Heart right ventricle (tissue), 16 donors: ENCODE measurements at regions of chr10 and their contacts with region 1.

Region 1: DNA sequence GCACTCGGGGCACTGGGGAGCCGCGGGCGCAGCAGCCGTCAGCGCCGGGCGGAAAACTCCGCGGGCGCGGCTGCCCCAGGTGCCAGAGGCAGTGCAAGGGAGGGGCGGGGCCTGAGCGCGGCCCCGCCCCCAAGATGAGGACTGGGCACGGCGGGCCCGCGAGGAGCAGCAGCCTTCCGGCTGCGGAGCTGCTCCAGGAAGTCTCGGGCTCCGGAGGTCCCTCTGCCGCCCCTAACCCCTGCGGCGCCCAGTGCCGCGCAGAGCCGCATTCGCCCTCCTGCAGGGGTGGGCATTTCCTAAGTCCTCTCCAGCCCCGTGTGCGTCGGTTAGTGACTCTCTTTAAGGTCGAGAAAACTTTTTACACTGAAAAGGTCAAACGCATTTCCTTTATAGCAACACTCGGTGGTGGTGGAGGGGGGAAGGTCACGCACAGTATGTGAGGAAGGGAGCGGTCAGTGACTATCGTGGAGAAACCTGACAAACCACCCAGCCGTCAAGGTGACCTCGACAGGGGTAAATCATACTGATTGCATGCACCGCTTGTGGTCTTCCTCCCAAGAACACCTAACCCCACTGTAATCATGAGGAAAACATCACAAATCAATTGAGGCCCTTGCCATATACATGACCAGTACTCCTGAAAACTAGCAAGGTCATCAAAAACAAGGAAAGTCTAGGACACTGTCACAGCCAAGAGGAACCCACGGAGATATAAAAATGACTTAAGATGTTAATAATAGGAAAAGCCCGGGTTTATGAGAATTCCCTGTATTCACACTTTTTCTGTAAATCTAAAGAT is at the start of gene ANXA11:
- DNase-seq: peak; percentile 83 to 88
- ATAC-seq: peak; percentile 73 to 88 (median 80)
- H3K4me3 ChIP-seq: peak within 1 kb of the TSS; percentile 64 to 96 (median 82)
- H3K27ac ChIP-seq: peak within 1 kb of the TSS; percentile 97 to 100 (median 99)
- H3K4me1 ChIP-seq: peaks cover 13 to 66% (median 53%) of the 10 kb centered on the region in 9 donors
- H3K27me3 ChIP-seq: no peaks in the 10 kb centered on the region
- CTCF ChIP-seq: no peak
- total RNA-seq, gene ANXA11: 338 to 558 (median 422) TPM

Region 2: DNA sequence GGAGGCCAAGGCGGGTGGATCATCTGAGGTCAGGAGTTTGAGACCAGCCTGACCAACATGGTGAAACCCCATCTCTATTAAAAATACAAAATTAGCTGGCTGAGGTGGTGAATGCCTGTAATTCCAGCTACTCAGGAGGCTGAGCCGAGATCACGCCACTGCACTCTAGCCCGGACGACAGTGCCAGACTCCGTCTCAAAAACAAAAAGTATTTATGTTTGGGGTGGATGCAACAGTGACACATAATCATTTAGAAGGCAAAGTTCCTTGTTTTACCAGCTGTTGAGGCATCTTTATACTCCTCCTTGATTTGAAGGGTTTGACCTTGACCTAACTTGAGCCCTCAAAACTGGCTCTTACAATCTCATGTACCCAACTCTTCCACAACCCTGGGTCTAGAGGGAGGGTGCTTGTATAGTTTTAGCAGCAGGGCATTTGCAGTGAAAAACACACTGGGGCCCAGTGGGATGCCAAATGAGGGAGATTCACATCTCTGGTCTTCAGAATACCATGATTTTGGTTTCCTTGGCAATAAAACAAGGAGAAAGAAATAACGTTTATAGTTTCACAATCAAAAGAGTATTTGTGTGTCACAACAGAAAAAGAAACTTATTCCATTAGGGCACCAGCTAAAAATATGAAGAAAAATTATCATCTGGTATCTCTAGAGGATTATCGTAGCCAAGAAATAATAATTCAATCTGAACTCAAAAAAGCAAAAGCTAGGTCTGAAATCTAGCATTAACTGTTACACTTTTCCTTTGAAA is 141.4 kb before region 1 on chr10:
- intact Hi-C with region 1: loop called in 3 of 10 experiments (anchors 10 kb)
- DNase-seq: no peak
- ATAC-seq: peak in 3 of 8 donors; percentile 28 to 52 (median 47)
- H3K4me3 ChIP-seq: no peak overlapping the region
- H3K27ac ChIP-seq: peak overlapping the region in 7 of 10 donors; percentile 2 to 69 (median 41)
- H3K4me1 ChIP-seq: peaks cover 0 to 7% (median 0%) of the 10 kb centered on the region in 9 donors
- H3K27me3 ChIP-seq: no peaks in the 10 kb centered on the region
- CTCF ChIP-seq: no peak

Region 3: GRCh38 chr10:80078448-80079311 is 127.0 kb before region 1 on chr10 and contains the start of gene TMEM254:
- intact Hi-C with region 1: loop called in 1 of 10 experiments (anchors 10 kb)
- DNase-seq: peak; percentile 93 to 95
- ATAC-seq: peak; percentile 97 to 99 (median 98)
- H3K4me3 ChIP-seq: peak within 1 kb of the TSS; percentile 64 to 96 (median 79)
- H3K27ac ChIP-seq: peak within 1 kb of the TSS; percentile 90 to 100 (median 96)
- H3K4me1 ChIP-seq: peaks cover 2 to 19% (median 16%) of the 10 kb centered on the region in 9 donors
- H3K27me3 ChIP-seq: no peaks in the 10 kb centered on the region
- CTCF ChIP-seq: peak in 1 of 9 donors; percentile 6
- total RNA-seq, gene TMEM254: 5.5 to 10.7 (median 8.3) TPM

Region 4: GRCh38 chr10:80158598-80159127 is 47.0 kb before region 1 on chr10:
- intact Hi-C with region 1: loop called in 8 of 10 experiments (anchors 2 to 5 kb)
- DNase-seq: peak; percentile 84 to 94
- ATAC-seq: peak; percentile 89 to 96 (median 94)
- H3K4me3 ChIP-seq: peak overlapping the region in 1 of 10 donors; percentile 25
- H3K27ac ChIP-seq: peak overlapping the region; percentile 44 to 90 (median 80)
- H3K4me1 ChIP-seq: peaks cover 9 to 71% (median 53%) of the 10 kb centered on the region in 9 donors
- H3K27me3 ChIP-seq: no peaks in the 10 kb centered on the region
- CTCF ChIP-seq: no peak

Region 5: GRCh38 chr10:80168679-80169380 is 36.8 kb before region 1 on chr10:
- intact Hi-C with region 1: loop called in 6 of 10 experiments (anchors 2 to 5 kb)
- DNase-seq: no peak
- ATAC-seq: peak in 2 of 8 donors; percentile 18 to 31
- H3K4me3 ChIP-seq: no peak overlapping the region
- H3K27ac ChIP-seq: peak overlapping the region in 9 of 10 donors; percentile 36 to 86 (median 74)
- H3K4me1 ChIP-seq: peaks cover 39 to 96% (median 83%) of the 10 kb centered on the region in 9 donors
- H3K27me3 ChIP-seq: no peaks in the 10 kb centered on the region
- CTCF ChIP-seq: peak in 6 of 9 donors; percentile 17 to 44 (median 24)

Region 6: GRCh38 chr10:80265740-80266512 is 60.2 kb after region 1 on chr10:
- intact Hi-C with region 1: no loop called
- DNase-seq: no peak
- ATAC-seq: peak; percentile 18 to 82 (median 54)
- H3K4me3 ChIP-seq: no peak overlapping the region
- H3K27ac ChIP-seq: no peak overlapping the region
- H3K4me1 ChIP-seq: peaks cover 0 to 8% (median 0%) of the 10 kb centered on the region in 9 donors
- H3K27me3 ChIP-seq: no peaks in the 10 kb centered on the region
- CTCF ChIP-seq: no peak

Region 7: GRCh38 chr10:80429521-80429966 is 223.9 kb after region 1 on chr10:
- intact Hi-C with region 1: no loop called
- DNase-seq: no peak
- ATAC-seq: peak in 3 of 8 donors; percentile 39 to 69 (median 60)
- H3K4me3 ChIP-seq: no peak overlapping the region
- H3K27ac ChIP-seq: no peak overlapping the region
- H3K4me1 ChIP-seq: no peaks in the 10 kb centered on the region
- H3K27me3 ChIP-seq: no peaks in the 10 kb centered on the region
- CTCF ChIP-seq: no peak